Activated naive CD4-positive, alpha-beta T cell treated with anti-CD3 and anti-CD28 coated beads for 36 hours (primary cell): ENCODE measurements at regions of chr5 and their contacts with region 1.

Region 1: DNA sequence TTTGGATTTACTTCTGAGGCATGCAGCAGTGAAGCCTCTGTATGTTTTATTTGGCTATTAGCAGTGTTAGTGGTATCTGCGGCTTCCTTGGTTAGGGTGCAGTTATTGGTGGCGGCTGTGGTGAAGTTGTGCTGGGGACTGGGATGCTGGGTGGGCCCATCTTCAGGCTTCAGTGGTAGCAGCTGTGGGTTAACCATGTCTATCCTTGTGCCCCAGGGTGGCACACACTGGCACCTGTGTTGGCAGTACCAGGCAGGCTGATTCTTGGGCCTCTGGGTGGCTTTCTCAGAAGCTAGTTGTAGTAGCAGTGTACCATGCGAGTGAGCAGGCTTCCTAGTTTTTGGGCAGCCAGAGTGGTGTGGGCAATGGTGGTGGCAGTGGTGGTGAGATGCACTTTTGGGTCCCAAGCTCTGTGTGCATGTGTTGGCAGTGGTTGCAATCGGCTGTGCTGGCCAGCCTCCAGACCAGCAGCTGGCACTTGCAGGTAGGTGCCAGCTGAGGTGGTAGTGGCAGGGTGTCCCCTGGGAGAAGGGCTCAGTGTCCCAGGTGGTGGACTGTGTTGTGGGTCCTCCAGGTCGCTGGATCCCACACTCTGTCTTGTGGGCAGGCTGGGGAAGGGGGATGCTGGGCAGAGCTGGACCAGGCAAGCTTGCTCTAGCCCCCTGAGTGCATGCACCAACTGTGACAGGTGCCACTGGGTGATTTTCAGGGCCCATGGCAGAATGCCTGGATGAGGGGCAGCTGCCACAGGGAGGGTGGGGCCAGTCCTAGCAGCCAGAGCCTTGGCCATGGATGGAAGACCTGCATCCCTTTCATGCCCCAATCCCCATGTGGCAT is 13.6 kb downstream of the AHRR start:
- DNase-seq: no peak
- H3K4me3 Mint-ChIP-seq: no peak overlapping the region
- H3K27ac Mint-ChIP-seq: no peak overlapping the region
- H3K4me1 Mint-ChIP-seq: peaks cover 27% of the 10 kb centered on the region
- H3K27me3 Mint-ChIP-seq: peaks cover 2% of the 10 kb centered on the region

Region 2: DNA sequence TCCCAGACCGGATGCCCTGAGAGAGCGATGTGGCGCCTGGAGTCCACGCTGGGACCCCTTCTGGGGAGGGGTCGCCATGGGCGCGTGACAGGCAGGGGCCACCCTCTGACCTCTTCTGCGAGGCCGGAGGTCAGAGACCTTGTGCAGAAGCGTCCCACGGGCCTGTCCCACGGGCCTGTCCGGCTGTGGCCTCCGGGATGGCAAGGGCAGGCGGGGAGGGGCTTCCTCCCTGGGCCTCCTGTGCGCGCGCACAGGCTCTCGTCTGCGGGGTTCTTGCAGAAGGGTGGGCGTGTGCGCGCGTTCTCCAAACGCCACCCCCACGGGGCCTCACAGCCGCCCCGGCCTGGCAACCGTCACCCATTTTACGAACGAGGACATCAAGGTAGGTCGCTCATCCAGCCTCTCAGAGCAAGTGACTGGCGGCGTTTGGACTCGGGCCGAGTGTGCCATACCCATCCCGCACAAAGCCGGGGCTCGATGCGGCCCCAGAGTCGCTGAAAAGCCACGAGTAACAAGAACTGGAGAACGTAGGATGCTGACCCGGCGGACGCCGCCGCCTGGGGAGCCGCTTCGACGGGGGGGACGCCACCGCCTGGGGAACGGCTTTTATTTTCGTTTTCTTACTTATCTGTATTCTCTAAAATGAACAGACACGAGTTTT is 12.7 kb before region 1 on chr5:
- CTCF ChIA-PET with region 1: interaction called, 3 read pairs
- intact Hi-C with region 1: loop called (anchors 1 kb)
- DNase-seq: no peak
- H3K4me3 Mint-ChIP-seq: peak overlapping the region; percentile 47
- H3K27ac Mint-ChIP-seq: no peak overlapping the region
- H3K4me1 Mint-ChIP-seq: peaks cover 6% of the 10 kb centered on the region
- H3K27me3 Mint-ChIP-seq: peaks cover 49% of the 10 kb centered on the region

Region 3: GRCh38 chr5:378976-379742 is 44.0 kb after region 1 on chr5:
- CTCF ChIA-PET with region 1: no interaction called
- intact Hi-C with region 1: loop called (anchors 1 kb)
- DNase-seq: peak; percentile 15
- H3K4me3 Mint-ChIP-seq: peak overlapping the region; percentile 20
- H3K27ac Mint-ChIP-seq: peak overlapping the region; percentile 92
- H3K4me1 Mint-ChIP-seq: peaks cover 50% of the 10 kb centered on the region
- H3K27me3 Mint-ChIP-seq: peaks cover 7% of the 10 kb centered on the region

Region 4: DNA sequence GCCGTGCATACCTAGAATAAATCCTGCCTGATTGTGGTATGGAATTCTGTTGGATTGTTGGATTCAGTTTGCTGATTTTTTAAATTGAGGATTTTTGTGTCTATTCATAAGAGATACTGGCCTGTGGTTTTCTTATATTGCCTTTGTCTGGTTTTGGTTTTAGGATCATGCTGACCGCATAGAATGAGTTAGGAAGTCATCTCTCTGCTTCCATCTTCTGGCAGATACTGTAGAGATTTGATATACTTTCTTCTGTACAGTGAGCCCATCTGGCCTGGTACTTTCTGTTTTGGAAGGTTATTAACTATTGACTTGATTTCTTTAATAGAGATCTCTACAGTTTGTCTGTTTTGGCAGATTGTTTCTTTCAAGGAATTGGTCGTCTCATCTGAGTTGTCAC is 291.7 kb after region 1 on chr5:
- CTCF ChIA-PET with region 1: no interaction called
- intact Hi-C with region 1: no loop called
- DNase-seq: no peak
- H3K4me3 Mint-ChIP-seq: no peak overlapping the region
- H3K27ac Mint-ChIP-seq: no peak overlapping the region
- H3K4me1 Mint-ChIP-seq: no peaks in the 10 kb centered on the region
- H3K27me3 Mint-ChIP-seq: no peaks in the 10 kb centered on the region

Region 5: GRCh38 chr5:1967736-1968135 is 1632.6 kb after region 1 on chr5:
- CTCF ChIA-PET with region 1: no interaction called
- intact Hi-C with region 1: no loop called
- DNase-seq: no peak
- H3K4me3 Mint-ChIP-seq: no peak overlapping the region
- H3K27ac Mint-ChIP-seq: no peak overlapping the region
- H3K4me1 Mint-ChIP-seq: no peaks in the 10 kb centered on the region
- H3K27me3 Mint-ChIP-seq: peaks cover 20% of the 10 kb centered on the region